ENCODE measurements at regions of chr16 and their contacts with region 1.

Region 1: GRCh38 chr16:1408171-1408837 is 6.2 kb downstream of the UNKL start:
- DNase-seq: peak; percentile 93
- H3K4me3 Mint-ChIP-seq: peak overlapping the region; percentile 74
- H3K27ac Mint-ChIP-seq: no peak overlapping the region
- H3K4me1 Mint-ChIP-seq: peaks cover 25% of the 10 kb centered on the region
- H3K27me3 Mint-ChIP-seq: no peaks in the 10 kb centered on the region

Region 2: DNA sequence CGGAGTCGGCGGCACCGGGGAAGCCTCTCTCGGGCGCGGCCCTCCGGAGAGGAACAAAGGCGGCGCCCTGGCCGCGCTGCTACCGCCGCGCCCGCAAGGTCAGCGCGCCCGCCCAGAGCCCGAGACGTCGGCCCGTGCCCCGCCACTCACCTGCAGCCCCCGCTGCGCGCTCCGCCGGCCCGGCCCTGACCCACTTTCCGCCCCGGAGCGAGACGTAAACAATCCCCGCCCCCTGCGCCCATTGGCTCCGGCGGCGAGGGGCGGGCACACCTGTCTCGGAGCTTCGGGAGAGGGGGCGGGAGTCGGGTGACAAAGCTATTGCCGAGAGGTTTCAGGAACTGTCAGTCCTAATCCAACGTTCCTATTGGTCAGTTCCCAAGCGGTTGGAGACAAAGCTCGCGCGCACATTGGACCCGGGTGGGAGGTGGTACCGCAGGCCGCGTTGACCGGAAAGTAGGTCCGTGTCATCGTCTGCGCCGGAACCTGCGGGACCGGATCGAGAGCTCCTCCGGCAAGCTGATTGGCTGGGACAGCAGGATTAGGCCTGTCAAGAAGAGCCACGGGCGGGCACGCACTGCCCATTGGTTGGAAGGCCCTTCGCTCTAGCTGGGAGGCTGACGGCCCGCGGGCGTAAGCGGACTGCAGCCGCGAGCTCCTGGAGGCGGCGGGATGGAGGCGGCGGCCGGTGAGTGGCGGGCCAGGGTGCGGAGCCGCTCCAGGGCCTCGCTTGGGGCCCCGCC is 374.2 kb after region 1 on chr16 and contains the starts of genes NUBP2 and SPSB3:
- CTCF ChIA-PET with region 1: no interaction called
- intact Hi-C with region 1: loop called (anchors 2 kb)
- DNase-seq: peak; percentile 100
- H3K4me3 Mint-ChIP-seq: peak within 1 kb of the TSS; percentile 90
- H3K27ac Mint-ChIP-seq: peak within 1 kb of the TSS; percentile 73
- H3K4me1 Mint-ChIP-seq: peaks cover 28% of the 10 kb centered on the region
- H3K27me3 Mint-ChIP-seq: no peaks in the 10 kb centered on the region
- total RNA-seq, gene NUBP2: 37.9 to 42.4 TPM
- total RNA-seq, gene SPSB3: 14.0 to 17.0 TPM